MCF 10A (cell line): ENCODE measurements at regions of chr3 and their contacts with region 1.

Region 1: DNA sequence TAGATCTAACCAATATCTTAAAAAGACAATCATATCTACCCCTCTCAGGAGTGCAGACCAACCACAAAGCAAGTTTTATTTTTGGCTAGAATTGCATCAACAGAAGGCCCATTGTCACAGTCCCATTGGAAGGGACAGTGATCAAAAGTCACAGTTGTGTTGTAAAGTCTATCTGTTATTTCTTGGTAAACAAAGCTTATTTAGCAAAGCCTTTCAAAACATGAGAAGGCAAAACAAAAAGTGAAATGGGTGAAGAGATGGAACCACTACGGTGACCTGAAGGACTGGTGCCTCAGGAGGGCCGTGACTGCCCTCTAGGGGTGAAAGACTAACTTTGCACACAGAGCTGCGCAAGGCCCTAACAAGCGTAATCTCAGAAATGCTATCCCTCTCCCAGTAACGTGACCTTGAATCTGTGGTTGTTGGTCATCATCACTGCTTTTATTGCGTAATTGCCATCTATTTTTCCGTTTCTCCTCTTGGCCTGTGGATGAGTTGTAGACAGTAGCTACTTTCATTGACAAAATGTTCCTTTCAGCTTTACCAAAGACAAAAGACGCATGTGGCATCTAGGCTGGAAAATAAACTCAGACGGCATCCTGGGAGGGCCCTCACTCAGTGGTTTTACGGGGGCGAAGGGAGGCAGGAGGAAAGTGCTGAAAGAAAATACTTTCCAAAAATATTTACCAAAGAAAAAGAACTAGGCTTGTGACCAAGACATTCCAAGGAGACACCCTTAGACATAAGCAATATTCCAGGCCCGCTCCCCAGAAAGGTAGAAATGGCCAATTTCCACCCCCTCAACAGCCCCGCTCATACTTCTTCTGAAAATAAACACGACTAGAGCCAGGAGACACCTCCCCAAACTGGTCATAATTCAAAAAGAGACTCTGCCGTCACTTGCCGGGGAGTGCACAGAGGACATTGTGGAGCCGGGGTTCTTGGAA is 79.4 kb downstream of the FRMD4B start:
- DNase-seq: peak; percentile 92
- H3K4me3 Mint-ChIP-seq: no peak overlapping the region
- H3K27ac Mint-ChIP-seq: peak overlapping the region; percentile 59
- H3K4me1 Mint-ChIP-seq: peaks cover 16% of the 10 kb centered on the region
- H3K27me3 Mint-ChIP-seq: no peaks in the 10 kb centered on the region
- CTCF ChIP-seq: peak; percentile 85

Region 2: DNA sequence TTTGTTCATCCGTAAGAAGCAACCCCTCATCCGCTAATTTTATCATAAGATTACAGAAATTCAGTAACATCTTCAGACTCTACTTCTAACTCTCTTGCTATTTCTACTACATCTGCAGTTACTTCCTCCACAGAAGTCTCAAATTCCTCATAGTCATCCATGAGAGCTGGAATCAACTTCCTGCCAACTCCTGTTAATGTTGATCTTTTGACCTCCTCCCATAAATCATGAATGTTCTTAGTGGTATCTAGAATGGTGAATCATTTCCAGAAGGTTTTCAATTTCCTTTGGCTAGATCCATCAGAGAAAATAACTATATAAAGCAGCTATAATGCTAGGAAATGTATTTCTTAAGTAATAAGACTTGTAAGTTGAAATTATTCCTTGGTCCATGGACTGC is 489.3 kb before region 1 on chr3:
- CTCF ChIA-PET with region 1: no interaction called
- POLR2A ChIA-PET with region 1: no interaction called
- intact Hi-C with region 1: no loop called
- DNase-seq: no peak
- H3K4me3 Mint-ChIP-seq: no peak overlapping the region
- H3K27ac Mint-ChIP-seq: no peak overlapping the region
- H3K4me1 Mint-ChIP-seq: peaks cover 6% of the 10 kb centered on the region
- H3K27me3 Mint-ChIP-seq: peaks cover 16% of the 10 kb centered on the region
- CTCF ChIP-seq: no peak

Region 3: GRCh38 chr3:68986481-68987208 is 319.9 kb before region 1 on chr3:
- CTCF ChIA-PET with region 1: no interaction called
- POLR2A ChIA-PET with region 1: no interaction called
- intact Hi-C with region 1: no loop called
- DNase-seq: no peak
- H3K4me3 Mint-ChIP-seq: no peak overlapping the region
- H3K27ac Mint-ChIP-seq: no peak overlapping the region
- H3K4me1 Mint-ChIP-seq: no peaks in the 10 kb centered on the region
- H3K27me3 Mint-ChIP-seq: no peaks in the 10 kb centered on the region
- CTCF ChIP-seq: no peak

Region 4: GRCh38 chr3:69174871-69175737 is 131.4 kb before region 1 on chr3:
- CTCF ChIA-PET with region 1: interaction called, 20 read pairs
- POLR2A ChIA-PET with region 1: no interaction called
- intact Hi-C with region 1: no loop called
- DNase-seq: no peak
- H3K4me3 Mint-ChIP-seq: no peak overlapping the region
- H3K27ac Mint-ChIP-seq: no peak overlapping the region
- H3K4me1 Mint-ChIP-seq: peaks cover 8% of the 10 kb centered on the region
- H3K27me3 Mint-ChIP-seq: no peaks in the 10 kb centered on the region
- CTCF ChIP-seq: no peak

Region 5: DNA sequence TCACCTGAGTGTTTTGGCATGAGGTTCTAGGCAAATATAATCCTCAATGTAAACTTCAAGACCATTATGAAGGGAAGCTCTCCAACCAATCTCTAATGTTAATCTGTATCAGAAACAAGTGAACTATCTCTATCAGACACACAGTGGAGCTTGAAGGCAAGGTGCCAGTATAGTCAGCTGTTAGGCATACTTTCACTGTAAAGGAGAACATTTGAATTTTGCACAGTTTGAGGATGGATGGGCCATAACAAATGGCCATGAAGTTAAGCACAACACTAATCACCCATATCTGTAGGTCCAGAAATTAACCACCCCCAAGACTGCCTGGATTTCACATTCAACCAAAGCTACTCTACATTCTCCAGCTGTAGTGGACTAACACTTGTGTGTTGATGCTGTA is 115.0 kb before region 1 on chr3:
- CTCF ChIA-PET with region 1: interaction called, 10 read pairs
- POLR2A ChIA-PET with region 1: no interaction called
- intact Hi-C with region 1: no loop called
- DNase-seq: no peak
- H3K4me3 Mint-ChIP-seq: no peak overlapping the region
- H3K27ac Mint-ChIP-seq: no peak overlapping the region
- H3K4me1 Mint-ChIP-seq: no peaks in the 10 kb centered on the region
- H3K27me3 Mint-ChIP-seq: no peaks in the 10 kb centered on the region
- CTCF ChIP-seq: no peak

Region 6: DNA sequence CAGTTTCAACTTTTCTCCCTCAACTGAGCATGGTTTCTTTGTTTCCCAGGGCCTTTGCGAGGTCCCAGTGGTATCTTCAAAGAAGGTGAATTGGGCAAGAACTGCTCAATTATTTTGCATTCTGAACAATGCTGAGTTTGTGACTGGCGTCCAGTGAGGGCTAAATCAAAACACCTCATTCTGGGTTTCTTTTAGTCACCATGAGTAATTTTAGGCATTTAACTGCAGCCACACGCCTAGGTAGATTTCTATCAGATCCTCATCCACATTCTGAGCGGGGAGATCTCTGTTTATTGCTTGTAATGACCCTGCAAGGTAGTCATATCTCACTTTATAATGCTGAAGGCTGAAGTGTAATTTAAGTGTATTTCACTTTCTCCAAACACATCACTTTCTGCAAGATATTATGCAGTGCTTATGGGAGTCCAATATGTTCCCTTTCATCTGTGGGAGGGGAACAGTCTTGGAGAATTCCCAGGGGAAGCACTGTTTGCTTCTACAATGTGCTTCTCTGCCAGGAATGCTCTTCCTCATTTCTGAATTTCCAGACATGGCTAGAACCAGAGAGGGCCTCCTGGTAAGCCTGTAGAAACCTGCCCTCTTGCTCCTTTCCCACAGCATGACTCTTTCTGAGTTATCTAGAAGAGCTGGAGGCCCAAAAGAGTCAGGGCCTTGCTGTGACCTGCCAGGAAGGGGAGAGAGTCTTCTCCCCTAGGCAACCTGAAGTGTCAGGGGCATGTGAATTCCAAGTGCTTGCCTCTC is 12.3 kb before region 1 on chr3:
- CTCF ChIA-PET with region 1: interaction called, 20 read pairs
- POLR2A ChIA-PET with region 1: interaction called, 12 read pairs
- intact Hi-C with region 1: no loop called
- DNase-seq: peak; percentile 72
- H3K4me3 Mint-ChIP-seq: no peak overlapping the region
- H3K27ac Mint-ChIP-seq: peak overlapping the region; percentile 86
- H3K4me1 Mint-ChIP-seq: peaks cover 13% of the 10 kb centered on the region
- H3K27me3 Mint-ChIP-seq: no peaks in the 10 kb centered on the region
- CTCF ChIP-seq: no peak

Region 7: DNA sequence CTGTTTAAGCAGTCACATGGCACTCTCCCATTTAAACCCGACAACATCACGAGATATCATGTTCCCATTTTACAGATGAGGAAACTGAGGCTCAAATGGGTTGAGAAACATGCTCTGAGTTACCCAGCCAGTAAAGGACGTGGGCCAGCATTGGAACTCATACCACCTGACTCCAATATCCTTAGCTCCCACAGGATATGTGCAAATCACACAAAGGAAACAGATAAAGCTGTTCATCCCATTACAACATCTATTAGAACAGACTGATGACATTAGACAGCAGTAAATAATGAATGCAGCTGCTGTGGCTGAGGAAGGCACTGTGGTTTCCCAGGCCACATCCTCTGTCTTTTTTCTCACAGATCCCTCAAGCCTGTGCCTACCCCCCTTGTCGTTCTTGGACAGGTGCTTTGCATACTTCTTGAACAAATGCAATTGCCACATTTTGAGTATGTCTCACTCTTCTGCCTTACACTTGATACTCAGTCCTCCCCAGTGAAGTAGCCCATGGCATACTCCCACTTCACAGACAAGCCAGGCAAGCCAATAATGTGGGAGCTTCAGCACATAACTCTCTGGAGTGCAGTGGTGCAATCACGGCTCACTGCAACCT is 61.7 kb after region 1 on chr3:
- CTCF ChIA-PET with region 1: interaction called, 10 read pairs
- POLR2A ChIA-PET with region 1: interaction called, 3 read pairs
- intact Hi-C with region 1: no loop called
- DNase-seq: peak; percentile 41
- H3K4me3 Mint-ChIP-seq: no peak overlapping the region
- H3K27ac Mint-ChIP-seq: peak overlapping the region; percentile 98
- H3K4me1 Mint-ChIP-seq: peaks cover 44% of the 10 kb centered on the region
- H3K27me3 Mint-ChIP-seq: no peaks in the 10 kb centered on the region
- CTCF ChIP-seq: no peak

Region 8: DNA sequence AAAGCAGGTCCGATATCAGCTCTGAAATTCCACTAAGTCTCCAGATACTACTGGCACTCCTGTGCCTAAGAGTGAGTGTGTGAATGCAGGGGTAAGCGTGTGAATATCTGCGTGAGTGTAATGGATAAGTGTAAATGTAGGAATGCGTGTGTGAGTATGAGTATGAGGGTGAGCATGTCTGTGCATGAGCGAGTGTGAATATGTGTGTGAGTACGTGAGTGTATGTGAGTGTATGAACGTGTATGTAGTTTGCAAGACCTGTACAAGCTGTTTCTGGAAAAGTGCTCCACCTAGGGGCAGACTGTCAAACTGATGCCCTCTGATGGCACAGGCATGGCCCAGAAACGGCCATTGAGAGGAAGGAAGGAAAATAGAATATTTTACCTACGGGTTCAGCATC is 103.7 kb after region 1 on chr3:
- CTCF ChIA-PET with region 1: interaction called, 34 read pairs
- POLR2A ChIA-PET with region 1: no interaction called
- intact Hi-C with region 1: no loop called
- DNase-seq: peak; percentile 81
- H3K4me3 Mint-ChIP-seq: no peak overlapping the region
- H3K27ac Mint-ChIP-seq: no peak overlapping the region
- H3K4me1 Mint-ChIP-seq: peaks cover 13% of the 10 kb centered on the region
- H3K27me3 Mint-ChIP-seq: no peaks in the 10 kb centered on the region
- CTCF ChIP-seq: peak; percentile 66

Region 9: GRCh38 chr3:69671082-69671952 is 364.8 kb after region 1 on chr3:
- CTCF ChIA-PET with region 1: interaction called, 34 read pairs
- POLR2A ChIA-PET with region 1: no interaction called
- intact Hi-C with region 1: loop called (anchors 1 kb)
- DNase-seq: peak; percentile 67
- H3K4me3 Mint-ChIP-seq: no peak overlapping the region
- H3K27ac Mint-ChIP-seq: no peak overlapping the region
- H3K4me1 Mint-ChIP-seq: peaks cover 14% of the 10 kb centered on the region
- H3K27me3 Mint-ChIP-seq: no peaks in the 10 kb centered on the region
- CTCF ChIP-seq: peak; percentile 70